WTC11 (cell line): ENCODE measurements at regions of chr14 and their contacts with region 1.

Region 1: GRCh38 chr14:60656686-60657455 is 7.6 kb upstream of the SIX1 start:
- DNase-seq: peak; percentile 86
- ATAC-seq: peak; percentile 64
- H3K4me3 Mint-ChIP-seq: peak overlapping the region; percentile 75
- H3K27ac Mint-ChIP-seq: no peak overlapping the region
- H3K4me1 Mint-ChIP-seq: peaks cover 62% of the 10 kb centered on the region
- H3K27me3 Mint-ChIP-seq: peaks cover 94% of the 10 kb centered on the region
- CTCF ChIP-seq: no peak

Region 2: DNA sequence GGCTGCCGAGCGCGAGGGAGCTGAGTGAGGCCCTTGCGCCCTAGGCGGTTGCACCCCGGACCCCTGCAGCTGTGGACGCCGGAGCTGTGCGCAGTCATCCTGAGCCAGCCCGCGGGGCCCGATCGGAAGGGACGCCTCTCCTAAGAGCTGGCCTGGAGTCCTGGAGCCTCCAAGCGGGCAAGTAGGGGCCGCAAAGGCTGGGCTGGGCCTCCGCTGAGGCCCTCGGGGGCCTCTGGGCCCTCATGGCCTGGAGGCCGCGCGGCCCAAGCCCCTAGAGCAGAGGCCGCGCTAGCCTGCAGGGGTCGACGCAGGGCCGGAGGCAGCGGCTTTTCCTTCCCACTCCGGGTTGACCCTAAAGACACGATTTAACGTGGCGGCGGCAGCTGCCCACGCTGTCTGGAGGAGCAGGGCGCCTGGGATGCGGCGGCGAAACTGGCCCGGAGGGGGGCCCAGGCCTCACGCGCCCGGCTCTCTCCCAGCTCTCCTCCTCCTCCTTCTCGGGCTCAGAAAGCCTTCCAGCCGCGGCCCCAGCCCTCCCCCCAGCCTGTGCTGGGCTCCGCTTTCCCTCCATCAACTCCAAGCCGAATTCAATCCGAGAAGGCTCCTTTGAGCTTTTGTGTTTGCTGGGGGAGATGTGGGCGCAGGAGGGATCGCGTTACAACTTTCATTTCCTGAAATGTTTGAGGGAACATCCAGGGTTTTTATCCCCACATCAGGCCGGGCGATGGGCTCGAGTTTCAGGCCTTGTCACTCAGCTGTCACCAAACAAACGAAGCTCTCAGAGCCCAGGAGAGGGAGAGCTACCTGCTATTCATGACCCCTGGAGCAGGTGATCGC is 19.2 kb before region 1 on chr14:
- CTCF ChIA-PET with region 1: interaction called, 20 read pairs
- POLR2A ChIA-PET with region 1: interaction called, 5 read pairs
- DNase-seq: peak; percentile 59
- ATAC-seq: peak; percentile 50
- H3K4me3 Mint-ChIP-seq: peak overlapping the region; percentile 70
- H3K27ac Mint-ChIP-seq: 0 out of 2 replicates have a peak overlapping the region, but pooled peaks have one; percentile 32
- H3K4me1 Mint-ChIP-seq: peaks cover 52% of the 10 kb centered on the region
- H3K27me3 Mint-ChIP-seq: peaks cover 78% of the 10 kb centered on the region
- CTCF ChIP-seq: no peak

Region 3: GRCh38 chr14:60789656-60790055 is 132.8 kb after region 1 on chr14:
- CTCF ChIA-PET with region 1: no interaction called
- POLR2A ChIA-PET with region 1: no interaction called
- DNase-seq: no peak
- ATAC-seq: no peak
- H3K4me3 Mint-ChIP-seq: peak overlapping the region; percentile 10
- H3K27ac Mint-ChIP-seq: peak overlapping the region; percentile 88
- H3K4me1 Mint-ChIP-seq: peaks cover 41% of the 10 kb centered on the region
- H3K27me3 Mint-ChIP-seq: no peaks in the 10 kb centered on the region; the same call in 1 of the 2 replicates
- CTCF ChIP-seq: no peak